Heart right ventricle (tissue), 16 donors: ENCODE measurements at regions of chr11 and their contacts with region 1.

Region 1: DNA sequence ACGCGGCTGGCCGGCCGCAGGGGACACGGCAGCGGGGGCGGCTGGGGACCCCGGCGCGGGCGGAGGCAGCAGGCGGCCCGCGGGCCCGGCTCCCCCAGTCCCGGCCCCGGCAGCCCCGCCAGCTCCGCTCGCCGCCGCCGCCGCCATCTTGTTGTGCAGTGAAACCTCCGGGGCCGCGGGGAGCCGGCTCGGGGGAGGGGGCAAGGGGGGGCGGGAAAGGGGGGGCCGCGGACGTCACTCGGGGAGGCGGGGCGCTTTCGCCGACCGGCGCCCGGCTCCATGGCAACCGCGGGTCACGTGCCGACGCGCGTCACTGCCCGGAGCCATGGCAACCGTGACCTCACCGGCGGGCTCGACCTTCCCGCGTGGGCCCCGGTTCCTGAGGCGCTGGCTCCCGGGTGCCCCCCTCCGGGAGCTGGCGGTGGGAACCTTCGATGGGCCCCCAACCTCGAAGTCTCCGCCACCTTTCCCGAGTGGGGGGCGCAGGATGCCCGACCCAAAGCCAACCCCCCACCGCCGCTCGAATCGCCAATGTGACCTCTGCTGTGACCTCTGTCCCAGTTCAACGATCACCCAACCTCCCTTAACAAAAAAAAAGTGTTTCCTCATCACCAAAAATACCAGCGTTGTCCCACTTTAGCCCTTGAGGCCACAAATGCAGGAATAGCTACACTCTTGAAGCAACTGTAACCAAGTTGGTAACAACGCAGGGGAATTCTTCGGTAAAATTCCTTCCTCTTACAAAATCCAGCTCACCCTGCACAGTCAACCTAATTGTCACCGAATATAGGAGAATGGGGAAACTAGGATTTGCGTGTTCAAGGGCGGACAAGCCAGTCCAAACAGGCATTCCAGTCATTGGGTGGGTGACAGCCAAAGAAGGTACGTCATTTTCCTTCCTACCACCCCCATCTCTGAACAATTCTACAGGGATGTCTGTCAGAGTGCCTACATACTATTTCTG is at the start of gene SIK3:
- DNase-seq: peak; percentile 94 to 97
- ATAC-seq: peak; percentile 92 to 96 (median 95)
- H3K4me3 ChIP-seq: peak within 1 kb of the TSS; percentile 55 to 89 (median 84)
- H3K27ac ChIP-seq: peak within 1 kb of the TSS; percentile 91 to 100 (median 98)
- H3K4me1 ChIP-seq: peaks cover 11 to 57% (median 46%) of the 10 kb centered on the region in 9 donors
- H3K27me3 ChIP-seq: no peaks in the 10 kb centered on the region
- CTCF ChIP-seq: peak; percentile 14 to 83 (median 53)
- total RNA-seq, gene SIK3: 27.8 to 47.3 (median 39.3) TPM

Region 2: DNA sequence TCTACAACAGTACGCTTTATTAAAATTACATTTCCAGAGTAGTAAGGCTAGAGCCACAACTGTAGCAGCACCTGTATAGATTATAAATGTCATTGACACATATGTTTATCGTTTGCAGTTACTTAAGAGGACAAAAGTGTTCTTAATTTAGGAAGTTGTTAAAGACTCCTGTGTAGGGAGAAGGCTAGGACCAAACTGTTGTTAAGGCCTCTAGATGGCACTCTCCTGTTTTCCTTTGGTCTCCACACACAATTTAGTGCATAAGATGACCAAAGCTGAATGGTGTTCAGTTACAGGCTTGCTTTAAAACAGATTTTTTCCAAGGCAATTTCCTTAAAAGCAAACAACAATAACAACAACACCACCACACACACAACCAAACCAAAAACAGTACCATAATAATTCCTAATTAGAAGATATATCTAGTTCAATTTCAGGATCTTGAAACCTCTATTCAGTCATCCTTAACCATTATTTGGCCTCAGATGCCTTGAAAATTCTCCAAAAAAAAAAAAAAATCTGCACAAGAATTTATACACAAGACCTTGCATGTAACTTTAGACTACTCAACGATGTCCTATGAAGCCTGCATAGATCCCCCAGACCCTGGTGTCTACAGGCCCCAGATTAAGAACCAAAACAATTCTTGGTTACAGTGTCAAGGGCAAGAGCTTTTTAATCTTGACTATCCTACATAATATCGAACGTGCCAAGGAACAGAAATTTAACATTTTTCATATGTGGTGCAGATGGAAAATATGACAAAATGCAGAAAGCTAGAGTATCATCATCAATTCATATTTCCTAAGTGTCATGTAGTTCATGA is 218.5 kb before region 1 on chr11:
- intact Hi-C with region 1: loop called in 4 of 10 experiments (anchors 2 to 5 kb)
- DNase-seq: peak in 1 of 2 donors; percentile 48
- ATAC-seq: peak; percentile 63 to 94 (median 90)
- H3K4me3 ChIP-seq: no peak overlapping the region
- H3K27ac ChIP-seq: no peak overlapping the region
- H3K4me1 ChIP-seq: peaks cover 0 to 21% (median 3%) of the 10 kb centered on the region in 9 donors
- H3K27me3 ChIP-seq: no peaks in the 10 kb centered on the region
- CTCF ChIP-seq: peak; percentile 25 to 86 (median 72)

Region 3: GRCh38 chr11:116930177-116930576 is 168.4 kb before region 1 on chr11:
- intact Hi-C with region 1: loop called in 2 of 10 experiments (anchors 2 to 5 kb)
- DNase-seq: peak in 1 of 2 donors; percentile 26
- ATAC-seq: peak in 6 of 8 donors; percentile 34 to 69 (median 56)
- H3K4me3 ChIP-seq: peak overlapping the region in 8 of 10 donors; percentile 8 to 37 (median 28)
- H3K27ac ChIP-seq: peak overlapping the region in 8 of 10 donors; percentile 50 to 76 (median 64)
- H3K4me1 ChIP-seq: peaks cover 0 to 69% (median 51%) of the 10 kb centered on the region in 9 donors
- H3K27me3 ChIP-seq: no peaks in the 10 kb centered on the region
- CTCF ChIP-seq: no peak

Region 4: DNA sequence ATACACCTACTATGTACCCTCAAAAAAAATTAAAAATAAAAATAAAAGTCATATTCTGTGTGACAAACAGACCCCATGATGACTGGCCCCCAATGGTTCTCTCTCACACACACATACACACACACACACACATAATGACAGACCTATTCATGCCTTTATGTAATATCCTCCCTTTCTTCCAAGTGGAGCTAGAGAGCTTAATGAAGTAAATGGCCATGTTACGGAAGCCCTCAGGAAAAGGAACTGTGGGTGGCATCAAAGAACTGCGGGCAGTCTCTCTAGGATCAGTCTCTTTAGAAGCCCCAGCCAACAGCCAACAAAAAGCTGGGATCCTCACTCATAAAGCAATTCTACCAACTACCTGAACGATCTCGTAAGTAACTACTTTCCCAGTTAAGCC is 125.9 kb before region 1 on chr11:
- intact Hi-C with region 1: loop called in 1 of 10 experiments (anchors 5 kb)
- DNase-seq: no peak
- ATAC-seq: peak in 4 of 8 donors; percentile 51 to 64 (median 56)
- H3K4me3 ChIP-seq: no peak overlapping the region
- H3K27ac ChIP-seq: no peak overlapping the region
- H3K4me1 ChIP-seq: peaks cover 0 to 15% (median 6%) of the 10 kb centered on the region in 9 donors
- H3K27me3 ChIP-seq: no peaks in the 10 kb centered on the region
- CTCF ChIP-seq: peak in 3 of 9 donors; percentile 10 to 23 (median 16)

Region 5: GRCh38 chr11:116986521-116987105 is 111.9 kb before region 1 on chr11:
- intact Hi-C with region 1: loop called in 3 of 10 experiments (anchors 10 kb)
- DNase-seq: no peak
- ATAC-seq: peak in 3 of 8 donors; percentile 37 to 61 (median 39)
- H3K4me3 ChIP-seq: peak overlapping the region in 1 of 10 donors; percentile 6
- H3K27ac ChIP-seq: peak overlapping the region in 4 of 10 donors; percentile 4 to 70 (median 16)
- H3K4me1 ChIP-seq: peaks cover 5 to 83% (median 55%) of the 10 kb centered on the region in 9 donors
- H3K27me3 ChIP-seq: no peaks in the 10 kb centered on the region
- CTCF ChIP-seq: no peak

Region 6: GRCh38 chr11:116993599-116993998 is 105.0 kb before region 1 on chr11:
- intact Hi-C with region 1: loop called in 3 of 10 experiments (anchors 10 kb)
- DNase-seq: peak in 1 of 2 donors; percentile 38
- ATAC-seq: peak in 7 of 8 donors; percentile 37 to 81 (median 74)
- H3K4me3 ChIP-seq: no peak overlapping the region
- H3K27ac ChIP-seq: peak overlapping the region in 3 of 10 donors; percentile 34 to 46 (median 42)
- H3K4me1 ChIP-seq: peaks cover 0 to 48% (median 42%) of the 10 kb centered on the region in 9 donors
- H3K27me3 ChIP-seq: no peaks in the 10 kb centered on the region
- CTCF ChIP-seq: no peak

Region 7: DNA sequence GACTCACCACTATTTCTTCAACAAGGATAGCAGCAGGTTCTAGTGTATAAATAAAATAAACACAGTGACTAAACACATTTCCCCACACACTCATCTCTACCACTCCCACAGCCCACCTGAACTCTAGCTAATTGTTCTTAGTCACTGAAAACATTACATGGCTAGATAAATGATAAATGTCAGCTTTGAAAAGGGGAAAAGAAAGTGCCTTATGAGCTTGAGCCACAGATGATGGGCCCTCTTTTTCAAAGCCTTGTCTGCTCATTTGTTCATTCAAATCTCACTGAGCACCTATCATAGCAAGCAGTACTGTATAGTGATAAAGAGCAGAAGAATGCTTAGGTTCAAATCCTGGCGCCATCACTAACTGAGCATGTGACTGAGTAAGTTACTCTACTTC is 58.7 kb before region 1 on chr11:
- intact Hi-C with region 1: loop called in 2 of 10 experiments (anchors 5 kb)
- DNase-seq: no peak
- ATAC-seq: no peak
- H3K4me3 ChIP-seq: no peak overlapping the region
- H3K27ac ChIP-seq: no peak overlapping the region
- H3K4me1 ChIP-seq: peaks cover 0 to 72% (median 47%) of the 10 kb centered on the region in 9 donors
- H3K27me3 ChIP-seq: no peaks in the 10 kb centered on the region
- CTCF ChIP-seq: no peak

Region 8: DNA sequence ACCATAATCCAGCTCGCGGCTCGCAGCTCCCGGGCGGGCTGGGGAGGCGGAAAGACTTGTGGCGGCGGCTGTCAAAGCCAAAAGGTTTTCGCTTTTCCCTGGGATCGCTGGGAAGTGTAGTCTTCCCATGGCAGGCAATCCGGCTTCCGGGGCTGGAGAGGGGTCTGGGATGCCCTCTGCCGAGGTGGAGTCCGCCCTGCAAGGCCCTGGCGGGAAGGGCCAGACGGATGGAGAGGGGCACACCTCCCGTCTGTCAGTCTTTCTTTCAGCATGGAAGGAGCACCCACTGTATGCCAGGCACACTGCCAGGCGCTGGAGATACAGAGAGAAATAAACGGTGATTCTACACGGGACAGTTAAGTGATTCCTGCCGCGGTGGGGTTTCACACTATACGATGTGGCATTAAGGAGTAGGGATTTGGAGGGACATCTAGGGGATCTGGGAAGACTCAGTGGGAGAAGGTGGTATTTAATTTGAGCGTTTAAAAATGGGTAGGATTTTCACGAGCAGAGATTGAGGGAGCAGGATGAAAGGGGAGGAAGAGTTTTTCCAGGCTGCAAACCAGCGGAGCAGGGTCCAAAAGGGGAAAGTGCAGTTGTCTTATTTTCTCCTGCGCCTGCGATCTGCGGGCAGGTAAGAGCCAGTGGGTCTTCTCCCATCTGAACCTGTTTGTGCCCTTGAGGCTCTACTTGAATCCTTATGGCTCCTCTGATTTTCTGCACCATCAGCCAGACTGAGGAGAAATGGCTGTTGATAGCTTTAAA is 217.8 kb after region 1 on chr11 and contains the start of gene BACE1:
- intact Hi-C with region 1: no loop called
- DNase-seq: peak; percentile 83 to 90
- ATAC-seq: peak; percentile 92 to 97 (median 96)
- H3K4me3 ChIP-seq: peak within 1 kb of the TSS; percentile 65 to 95 (median 88)
- H3K27ac ChIP-seq: peak within 1 kb of the TSS in 9 of 10 donors; percentile 40 to 80 (median 69)
- H3K4me1 ChIP-seq: peaks cover 11 to 37% (median 22%) of the 10 kb centered on the region in 9 donors
- H3K27me3 ChIP-seq: peaks cover 0 to 8% (median 0%) of the 10 kb centered on the region in 7 donors
- CTCF ChIP-seq: peak in 8 of 9 donors; percentile 22 to 66 (median 39)
- total RNA-seq, gene BACE1: 10.8 to 18.7 (median 15.1) TPM